ENCODE measurements at regions of chr6 and their contacts with region 1.

Region 1: GRCh38 chr6:169701954-169702839 is at the starts of genes C6orf120 and WDR27:
- DNase-seq: peak; percentile 93 to 98 (median 96)
- ATAC-seq: peak; percentile 88
- H3K4me3 Mint-ChIP-seq: peak within 1 kb of the TSS; percentile 87 to 94 (median 91)
- H3K27ac Mint-ChIP-seq: peak within 1 kb of the TSS; percentile 89 to 97 (median 94)
- H3K4me1 Mint-ChIP-seq: peaks cover 19 to 75% (median 59%) of the 10 kb centered on the region in 4 donors
- H3K27me3 Mint-ChIP-seq: no peaks in the 10 kb centered on the region
- polyA plus RNA-seq, gene C6orf120: 7.9 to 10.1 (median 8.1) TPM
- polyA plus RNA-seq, gene WDR27: 3.7 to 7.3 (median 6.4) TPM

Region 2: GRCh38 chr6:169751242-169752073 is 49.3 kb after region 1 on chr6 and contains the starts of genes DYNLT2 and ERMARD:
- POLR2A ChIA-PET with region 1: interaction called, 52 read pairs
- DNase-seq: peak; percentile 89 to 95 (median 94)
- ATAC-seq: peak; percentile 94
- H3K4me3 Mint-ChIP-seq: peak within 1 kb of the TSS; percentile 96 to 100 (median 98)
- H3K27ac Mint-ChIP-seq: peak within 1 kb of the TSS; percentile 98 to 100 (median 100)
- H3K4me1 Mint-ChIP-seq: peaks cover 16 to 41% (median 37%) of the 10 kb centered on the region in 4 donors
- H3K27me3 Mint-ChIP-seq: no peaks in the 10 kb centered on the region
- polyA plus RNA-seq, gene DYNLT2: 0.35 to 0.67 (median 0.63) TPM
- polyA plus RNA-seq, gene ERMARD: 9.2 to 12.4 (median 9.2) TPM

Measured in naive thymus-derived CD8-positive, alpha-beta T cell (primary cell).